ENCODE measurements at regions of chr19 and their contacts with region 1.

Region 1: GRCh38 chr19:13588957-13589833 is 82.9 kb upstream of the CACNA1A start:
- DNase-seq: peak; percentile 55
- H3K4me3 Mint-ChIP-seq: no peak overlapping the region
- H3K27ac Mint-ChIP-seq: no peak overlapping the region
- H3K4me1 Mint-ChIP-seq: no peaks in the 10 kb centered on the region
- H3K27me3 Mint-ChIP-seq: peaks cover 35% of the 10 kb centered on the region
- CTCF ChIP-seq: peak; percentile 90

Region 2: GRCh38 chr19:12974301-12975220 is 614.6 kb before region 1 on chr19:
- CTCF ChIA-PET with region 1: interaction called, 17 read pairs
- POLR2A ChIA-PET with region 1: no interaction called
- intact Hi-C with region 1: no loop called
- DNase-seq: no peak
- H3K4me3 Mint-ChIP-seq: no peak overlapping the region
- H3K27ac Mint-ChIP-seq: no peak overlapping the region
- H3K4me1 Mint-ChIP-seq: peaks cover 6% of the 10 kb centered on the region
- H3K27me3 Mint-ChIP-seq: no peaks in the 10 kb centered on the region
- CTCF ChIP-seq: no peak

Region 3: GRCh38 chr19:13270514-13271105 is 318.6 kb before region 1 on chr19:
- CTCF ChIA-PET with region 1: interaction called, 83 read pairs
- POLR2A ChIA-PET with region 1: no interaction called
- intact Hi-C with region 1: no loop called
- DNase-seq: no peak
- H3K4me3 Mint-ChIP-seq: no peak overlapping the region
- H3K27ac Mint-ChIP-seq: no peak overlapping the region
- H3K4me1 Mint-ChIP-seq: no peaks in the 10 kb centered on the region
- H3K27me3 Mint-ChIP-seq: no peaks in the 10 kb centered on the region
- CTCF ChIP-seq: no peak

Region 4: DNA sequence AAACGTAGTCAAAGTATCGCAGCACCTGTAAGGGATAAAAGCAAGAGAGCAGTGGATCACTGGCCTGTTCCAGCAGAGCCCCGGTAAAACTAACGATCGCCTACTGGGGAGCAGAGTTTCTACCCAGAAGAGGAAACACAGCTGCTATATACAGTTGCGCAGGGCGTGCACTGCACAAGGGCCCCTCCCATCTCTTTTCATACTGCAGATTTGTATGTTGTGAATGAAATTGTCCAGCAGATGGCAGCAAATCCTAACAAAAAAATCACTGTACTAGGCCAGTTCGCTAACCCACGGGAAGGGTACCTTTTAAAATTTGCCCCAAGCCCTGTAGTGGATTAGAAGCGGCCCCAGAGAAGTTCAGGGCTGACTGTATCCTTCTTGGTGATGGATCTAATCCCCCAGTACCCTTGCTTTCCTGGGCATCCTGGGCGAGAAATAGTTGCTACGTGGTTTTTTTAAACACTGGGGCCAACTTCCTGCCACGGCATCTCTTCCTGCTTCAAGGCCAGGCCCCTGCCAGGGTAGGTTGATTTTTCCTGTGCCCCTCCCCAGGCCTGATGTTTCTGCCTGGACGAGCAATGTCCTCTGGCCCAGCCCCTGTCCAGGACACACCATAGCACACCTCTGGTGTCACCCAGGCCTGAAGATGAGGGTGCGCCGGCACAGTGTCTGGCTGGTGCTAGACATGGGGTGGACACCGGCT is 311.9 kb before region 1 on chr19:
- CTCF ChIA-PET with region 1: interaction called, 83 read pairs
- POLR2A ChIA-PET with region 1: interaction called, 3 read pairs
- intact Hi-C with region 1: loop called (anchors 1 kb)
- DNase-seq: peak; percentile 86
- H3K4me3 Mint-ChIP-seq: no peak overlapping the region
- H3K27ac Mint-ChIP-seq: no peak overlapping the region
- H3K4me1 Mint-ChIP-seq: no peaks in the 10 kb centered on the region
- H3K27me3 Mint-ChIP-seq: no peaks in the 10 kb centered on the region
- CTCF ChIP-seq: peak; percentile 62

Region 5: GRCh38 chr19:13366529-13367143 is 222.6 kb before region 1 on chr19:
- CTCF ChIA-PET with region 1: interaction called, 4 read pairs
- POLR2A ChIA-PET with region 1: no interaction called
- intact Hi-C with region 1: loop called (anchors 1 kb)
- DNase-seq: peak; percentile 61
- H3K4me3 Mint-ChIP-seq: no peak overlapping the region
- H3K27ac Mint-ChIP-seq: no peak overlapping the region
- H3K4me1 Mint-ChIP-seq: no peaks in the 10 kb centered on the region
- H3K27me3 Mint-ChIP-seq: no peaks in the 10 kb centered on the region
- CTCF ChIP-seq: peak; percentile 63

Region 6: DNA sequence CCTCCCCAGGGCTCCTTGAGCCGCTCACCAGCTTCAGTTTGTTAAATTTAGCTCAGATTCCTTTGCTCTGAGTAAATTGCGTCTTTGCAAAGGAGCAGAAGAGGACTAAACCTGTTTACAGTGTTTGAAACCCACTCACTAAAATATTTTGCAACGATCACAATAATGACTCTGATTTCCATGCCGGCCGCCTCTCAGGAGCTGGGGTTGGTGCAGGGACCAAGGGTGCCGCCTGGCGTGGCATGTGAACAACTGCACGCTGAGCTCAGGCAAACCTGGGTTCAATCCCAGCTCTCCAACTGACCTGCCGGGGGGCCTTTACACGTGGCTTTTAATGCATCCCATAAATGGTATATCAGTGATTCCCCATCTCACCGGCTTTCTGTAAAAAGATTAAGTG is 14.3 kb before region 1 on chr19:
- CTCF ChIA-PET with region 1: interaction called, 25 read pairs
- POLR2A ChIA-PET with region 1: no interaction called
- intact Hi-C with region 1: no loop called
- DNase-seq: no peak
- H3K4me3 Mint-ChIP-seq: no peak overlapping the region
- H3K27ac Mint-ChIP-seq: no peak overlapping the region
- H3K4me1 Mint-ChIP-seq: no peaks in the 10 kb centered on the region
- H3K27me3 Mint-ChIP-seq: peaks cover 35% of the 10 kb centered on the region
- CTCF ChIP-seq: no peak

Region 7: GRCh38 chr19:13629687-13630357 is 40.6 kb after region 1 on chr19:
- CTCF ChIA-PET with region 1: no interaction called
- POLR2A ChIA-PET with region 1: no interaction called
- intact Hi-C with region 1: no loop called
- DNase-seq: peak; percentile 13
- H3K4me3 Mint-ChIP-seq: no peak overlapping the region
- H3K27ac Mint-ChIP-seq: no peak overlapping the region
- H3K4me1 Mint-ChIP-seq: peaks cover 16% of the 10 kb centered on the region
- H3K27me3 Mint-ChIP-seq: no peaks in the 10 kb centered on the region
- CTCF ChIP-seq: no peak

Region 8: DNA sequence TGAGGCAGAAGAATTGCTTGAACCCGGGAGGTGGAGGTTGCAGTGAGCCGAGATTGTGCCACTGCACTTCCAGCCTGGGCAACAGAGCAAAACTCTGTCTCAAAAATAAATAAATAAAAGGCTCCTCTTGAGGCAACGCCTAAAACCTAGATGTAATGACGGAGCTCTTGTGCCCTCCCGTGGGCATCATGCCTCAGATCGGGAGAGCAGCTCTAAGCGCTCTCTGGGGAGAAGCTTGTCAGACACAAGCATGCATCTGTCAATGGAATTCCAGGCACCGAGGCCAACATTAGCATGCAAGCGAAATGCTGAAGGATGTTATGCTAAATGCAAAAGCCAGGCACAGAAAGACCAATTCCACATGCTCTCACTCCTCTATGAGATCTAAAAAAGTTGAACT is 129.5 kb after region 1 on chr19:
- CTCF ChIA-PET with region 1: interaction called, 161 read pairs
- POLR2A ChIA-PET with region 1: no interaction called
- intact Hi-C with region 1: no loop called
- DNase-seq: peak; percentile 52
- H3K4me3 Mint-ChIP-seq: no peak overlapping the region
- H3K27ac Mint-ChIP-seq: no peak overlapping the region
- H3K4me1 Mint-ChIP-seq: no peaks in the 10 kb centered on the region
- H3K27me3 Mint-ChIP-seq: no peaks in the 10 kb centered on the region
- CTCF ChIP-seq: peak; percentile 59